ENCODE measurements at regions of chr6 and their contacts with region 1.

Region 1: DNA sequence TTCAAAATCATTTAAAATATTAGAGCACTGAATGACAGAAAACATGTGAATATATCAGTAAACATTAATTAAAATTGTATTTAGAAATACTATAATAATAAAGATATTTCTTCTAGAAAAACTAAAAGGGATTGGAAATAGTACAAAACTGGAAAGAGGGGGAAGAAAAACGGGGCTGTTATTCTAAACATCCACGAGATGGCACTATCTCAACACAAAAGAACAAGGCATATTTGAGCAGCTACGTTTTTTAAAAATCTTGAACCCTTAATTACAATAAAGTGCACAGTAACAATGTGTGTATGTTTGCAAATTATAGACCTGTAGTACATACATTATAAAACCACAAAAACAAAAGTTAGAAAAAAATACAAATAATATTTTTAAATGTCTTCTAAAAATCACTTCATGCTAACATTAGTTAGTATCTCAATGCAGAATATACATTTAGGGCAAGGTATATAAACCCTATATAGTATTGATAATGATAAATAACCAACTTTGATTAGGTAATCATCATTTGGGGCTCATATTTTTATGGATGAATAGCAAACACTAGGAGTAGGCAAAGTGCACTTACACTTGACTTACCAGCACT is 42.5 kb upstream of the PNISR start:
- DNase-seq: no peak
- H3K4me3 Mint-ChIP-seq: no peak overlapping the region
- H3K27ac Mint-ChIP-seq: no peak overlapping the region
- H3K4me1 Mint-ChIP-seq: no peaks in the 10 kb centered on the region
- H3K27me3 Mint-ChIP-seq: no peaks in the 10 kb centered on the region

Region 2: GRCh38 chr6:99746261-99746895 is 278.8 kb after region 1 on chr6:
- CTCF ChIA-PET with region 1: interaction called, 8 read pairs
- intact Hi-C with region 1: loop called (anchors 1 kb)
- DNase-seq: peak; percentile 69
- H3K4me3 Mint-ChIP-seq: no peak overlapping the region
- H3K27ac Mint-ChIP-seq: no peak overlapping the region
- H3K4me1 Mint-ChIP-seq: no peaks in the 10 kb centered on the region
- H3K27me3 Mint-ChIP-seq: peaks cover 28% of the 10 kb centered on the region

Region 3: DNA sequence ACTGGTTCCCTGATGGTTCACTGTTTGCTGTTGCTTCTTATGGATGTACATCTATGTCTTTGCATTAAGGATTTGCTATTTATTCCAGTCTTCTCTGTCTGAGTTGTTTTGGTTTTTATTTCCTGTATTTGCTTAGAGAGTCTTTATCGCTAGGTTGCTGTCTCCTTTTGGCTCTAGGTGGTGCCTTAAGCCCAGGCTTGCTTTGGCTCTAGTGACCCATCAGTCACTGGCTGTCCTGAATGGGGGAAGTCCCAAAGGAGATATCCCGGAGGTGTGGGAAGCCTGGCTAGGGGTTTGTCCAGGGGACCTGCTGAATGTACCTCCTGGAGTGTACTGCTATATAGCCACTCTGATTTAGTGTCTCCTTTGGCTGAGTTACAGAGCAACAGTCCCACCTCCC is 473.0 kb after region 1 on chr6:
- CTCF ChIA-PET with region 1: no interaction called
- intact Hi-C with region 1: no loop called
- DNase-seq: no peak
- H3K4me3 Mint-ChIP-seq: no peak overlapping the region
- H3K27ac Mint-ChIP-seq: no peak overlapping the region
- H3K4me1 Mint-ChIP-seq: no peaks in the 10 kb centered on the region
- H3K27me3 Mint-ChIP-seq: peaks cover 24% of the 10 kb centered on the region

Region 4: DNA sequence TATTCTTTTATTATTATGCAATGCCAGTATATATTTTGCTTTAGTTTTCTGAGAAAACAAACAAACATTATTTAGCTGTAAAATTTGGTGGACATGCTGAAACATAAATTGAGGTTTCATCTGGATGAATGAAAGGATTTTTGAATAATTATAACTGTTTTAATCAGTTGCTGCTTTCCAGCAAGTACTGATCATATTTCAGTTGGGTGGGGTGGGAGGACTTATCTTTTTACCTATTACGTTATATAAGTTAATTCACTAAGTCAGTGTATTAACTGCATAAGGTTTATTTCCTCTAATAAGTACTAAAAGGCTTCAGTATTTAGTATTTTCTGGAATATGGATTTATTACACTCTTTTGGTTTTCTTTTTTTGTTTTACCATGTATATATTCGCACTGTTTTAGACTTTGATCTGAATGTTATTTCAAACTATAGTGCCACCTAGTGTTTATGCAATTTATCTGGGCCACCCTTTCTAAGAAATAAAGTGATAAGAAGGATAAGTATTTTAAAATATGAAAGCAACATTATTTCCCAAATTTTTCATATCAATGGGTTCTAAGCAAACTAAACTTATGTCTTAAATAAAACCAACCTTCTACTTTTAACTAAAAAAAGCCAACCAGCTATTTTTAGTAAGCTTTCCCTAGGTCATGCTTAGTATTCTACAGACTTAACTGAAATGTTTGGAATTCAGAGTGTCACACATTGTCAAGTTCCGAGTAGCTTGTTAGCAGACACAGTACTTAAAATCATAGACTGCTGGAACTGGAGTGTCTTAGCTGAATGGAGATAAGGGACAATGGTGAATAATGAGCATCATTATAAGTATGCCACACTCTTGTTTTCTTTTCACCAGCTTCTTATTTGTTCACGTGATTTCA is 631.8 kb after region 1 on chr6:
- CTCF ChIA-PET with region 1: no interaction called
- intact Hi-C with region 1: loop called (anchors 5 kb)
- DNase-seq: no peak
- H3K4me3 Mint-ChIP-seq: no peak overlapping the region
- H3K27ac Mint-ChIP-seq: no peak overlapping the region
- H3K4me1 Mint-ChIP-seq: no peaks in the 10 kb centered on the region
- H3K27me3 Mint-ChIP-seq: no peaks in the 10 kb centered on the region

Measured in activated naive CD4-positive, alpha-beta T cell treated with anti-CD3 and anti-CD28 coated beads for 36 hours (primary cell).